CD14-positive monocyte (primary cell): ENCODE measurements at regions of chr17 and their contacts with region 1.

Region 1: GRCh38 chr17:42937712-42938596 is 26.3 kb downstream of the AARSD1 start:
- DNase-seq: peak; percentile 8 to 29 (median 18)
- H3K4me3 ChIP-seq: no peak overlapping the region
- H3K4me3 Mint-ChIP-seq: no peak overlapping the region
- H3K27ac ChIP-seq: no peak overlapping the region
- H3K27ac Mint-ChIP-seq: peak overlapping the region in 2 of 7 donors; percentile 16 to 27
- H3K4me1 ChIP-seq: peaks cover 0 to 10% of the 10 kb centered on the region in 2 donors
- H3K4me1 Mint-ChIP-seq: peaks cover 13% of the 10 kb centered on the region
- H3K27me3 ChIP-seq: no peaks in the 10 kb centered on the region
- H3K27me3 Mint-ChIP-seq: peaks cover 3 to 4% (median 4%) of the 10 kb centered on the region in 3 donors
- CTCF ChIP-seq: peak; percentile 47

Region 2: DNA sequence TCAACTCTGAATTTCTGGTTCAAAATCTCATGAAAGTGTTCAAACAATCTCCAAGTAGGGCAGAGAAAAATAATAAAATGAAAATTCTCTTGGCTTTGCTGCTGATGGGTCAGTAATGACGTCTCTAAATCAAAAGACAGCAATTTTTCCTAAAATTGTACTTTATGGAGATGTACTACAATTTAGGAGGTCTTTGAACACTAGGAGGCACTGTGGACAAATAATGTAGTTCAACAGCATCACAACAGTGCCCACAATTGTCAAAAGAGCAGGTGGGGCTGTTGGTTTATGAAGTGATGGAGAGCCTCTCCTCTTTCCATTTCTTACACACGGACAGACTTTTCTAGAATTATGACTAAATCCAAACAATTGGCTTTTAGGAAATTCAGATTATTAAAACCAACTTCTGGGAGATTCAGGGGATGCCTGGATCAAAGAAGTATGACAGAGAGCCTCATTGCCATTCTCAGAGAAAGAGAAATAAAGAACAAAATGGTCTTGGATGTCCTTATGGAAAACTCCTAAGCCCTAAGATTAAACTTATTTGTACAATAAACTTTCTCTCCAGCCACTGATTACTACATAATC is 216.9 kb before region 1 on chr17:
- intact Hi-C with region 1: loop called (anchors 5 to 10 kb)
- DNase-seq: peak; percentile 41 to 69 (median 56)
- H3K4me3 ChIP-seq: no peak overlapping the region
- H3K4me3 Mint-ChIP-seq: no peak overlapping the region
- H3K27ac ChIP-seq: no peak overlapping the region
- H3K27ac Mint-ChIP-seq: no peak overlapping the region
- H3K4me1 ChIP-seq: no peaks in the 10 kb centered on the region
- H3K4me1 Mint-ChIP-seq: no peaks in the 10 kb centered on the region
- H3K27me3 ChIP-seq: no peaks in the 10 kb centered on the region
- H3K27me3 Mint-ChIP-seq: no peaks in the 10 kb centered on the region
- CTCF ChIP-seq: peak; percentile 80

Region 3: DNA sequence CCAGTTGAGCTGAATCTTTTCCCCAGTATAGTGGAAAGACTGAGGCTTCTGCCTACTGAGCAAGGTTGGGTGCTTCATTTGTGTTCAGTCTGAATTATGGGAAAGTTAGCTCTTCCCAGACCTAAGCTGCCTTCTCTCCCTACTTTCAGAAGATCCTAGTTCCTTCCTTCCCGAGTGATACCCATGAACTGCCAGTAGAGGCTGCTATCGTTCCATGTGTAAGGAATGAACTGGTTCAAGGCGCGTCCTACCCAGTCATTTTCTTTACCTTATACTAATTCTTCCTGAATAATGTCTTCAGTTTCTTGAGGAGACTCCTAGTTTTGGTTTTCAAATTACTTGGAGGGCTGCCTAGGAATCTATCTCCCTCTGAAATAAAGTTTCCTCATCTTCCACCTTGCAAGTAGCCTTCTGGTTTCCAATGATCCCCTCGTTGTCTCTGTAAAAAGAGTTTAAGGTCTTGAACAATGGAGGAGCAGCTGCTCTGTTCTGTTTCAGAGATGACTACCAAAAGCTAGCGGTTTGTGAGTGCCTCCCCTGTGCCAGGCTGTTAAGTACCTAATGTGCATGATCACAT is 94.5 kb before region 1 on chr17:
- intact Hi-C with region 1: loop called (anchors 2 to 5 kb)
- DNase-seq: peak; percentile 32 to 58 (median 51)
- H3K4me3 ChIP-seq: no peak overlapping the region
- H3K4me3 Mint-ChIP-seq: no peak overlapping the region
- H3K27ac ChIP-seq: no peak overlapping the region
- H3K27ac Mint-ChIP-seq: peak overlapping the region in 1 of 7 donors; percentile 69
- H3K4me1 ChIP-seq: peaks cover 19 to 23% of the 10 kb centered on the region in 2 donors
- H3K4me1 Mint-ChIP-seq: peaks cover 28% of the 10 kb centered on the region
- H3K27me3 ChIP-seq: no peaks in the 10 kb centered on the region
- H3K27me3 Mint-ChIP-seq: peaks cover 0 to 5% (median 2%) of the 10 kb centered on the region in 3 donors
- CTCF ChIP-seq: peak; percentile 86

Region 4: GRCh38 chr17:42985225-42985624 is 47.3 kb after region 1 on chr17:
- intact Hi-C with region 1: no loop called
- DNase-seq: peak; percentile 74 to 89 (median 86)
- H3K4me3 ChIP-seq: peak overlapping the region; percentile 5 to 64 (median 38)
- H3K4me3 Mint-ChIP-seq: peak overlapping the region; percentile 53 to 90
- H3K27ac ChIP-seq: peak overlapping the region; percentile 68 to 78
- H3K27ac Mint-ChIP-seq: peak overlapping the region; percentile 82 to 91 (median 88)
- H3K4me1 ChIP-seq: peaks cover 39 to 59% of the 10 kb centered on the region in 2 donors
- H3K4me1 Mint-ChIP-seq: peaks cover 44% of the 10 kb centered on the region
- H3K27me3 ChIP-seq: no peaks in the 10 kb centered on the region
- H3K27me3 Mint-ChIP-seq: peaks cover 0 to 2% (median 2%) of the 10 kb centered on the region in 3 donors
- CTCF ChIP-seq: no peak

Region 5: DNA sequence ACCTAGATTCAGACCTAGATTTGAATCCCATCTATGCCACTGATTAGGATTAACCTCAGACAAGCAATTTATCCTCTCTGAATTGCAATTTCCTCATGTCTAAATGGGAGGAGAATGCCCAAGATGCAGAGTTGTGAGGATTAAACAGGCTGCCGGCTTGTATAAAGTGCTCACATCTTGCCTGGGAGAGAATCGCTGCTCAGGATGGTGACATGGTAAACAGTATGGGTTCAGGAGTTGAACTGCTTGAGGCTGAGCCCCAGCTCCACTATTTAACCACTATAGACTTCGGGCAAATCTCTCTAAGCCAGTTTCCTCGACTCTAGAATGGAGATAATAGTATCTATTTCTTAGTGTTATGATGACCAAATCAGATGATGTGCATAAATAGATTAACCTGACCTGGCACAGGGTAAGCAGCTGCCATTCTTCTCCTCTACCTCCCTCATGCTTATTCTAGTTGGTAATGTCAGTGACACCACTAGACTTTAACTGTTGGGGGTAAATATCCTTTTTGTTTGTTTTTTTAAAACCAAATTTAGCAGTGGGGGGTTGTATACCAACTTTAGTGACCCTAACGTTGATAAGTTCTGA is 59.5 kb after region 1 on chr17:
- intact Hi-C with region 1: no loop called
- DNase-seq: no peak
- H3K4me3 ChIP-seq: peak overlapping the region in 2 of 3 experiments; percentile 4 to 99
- H3K4me3 Mint-ChIP-seq: peak overlapping the region; percentile 91 to 99
- H3K27ac ChIP-seq: peak overlapping the region; percentile 67 to 94
- H3K27ac Mint-ChIP-seq: peak overlapping the region; percentile 91 to 99 (median 99)
- H3K4me1 ChIP-seq: peaks cover 46 to 49% of the 10 kb centered on the region in 2 donors
- H3K4me1 Mint-ChIP-seq: peaks cover 45% of the 10 kb centered on the region
- H3K27me3 ChIP-seq: no peaks in the 10 kb centered on the region
- H3K27me3 Mint-ChIP-seq: peaks cover 0 to 3% (median 0%) of the 10 kb centered on the region in 3 donors
- CTCF ChIP-seq: no peak